ENCODE measurements at regions of chr5 and their contacts with region 1.

Region 1: GRCh38 chr5:35117967-35118366 is 70.2 kb upstream of the AGXT2 start:
- DNase-seq: no peak
- H3K4me3 ChIP-seq: no peak overlapping the region
- H3K27ac ChIP-seq: no peak overlapping the region
- H3K4me1 ChIP-seq: no peaks in the 10 kb centered on the region
- H3K27me3 ChIP-seq: no peaks in the 10 kb centered on the region
- CTCF ChIP-seq: no peak
- EP300 ChIP-seq: no peak
- POLR2A ChIP-seq: no peak
- RAD21 ChIP-seq: no peak

Region 2: DNA sequence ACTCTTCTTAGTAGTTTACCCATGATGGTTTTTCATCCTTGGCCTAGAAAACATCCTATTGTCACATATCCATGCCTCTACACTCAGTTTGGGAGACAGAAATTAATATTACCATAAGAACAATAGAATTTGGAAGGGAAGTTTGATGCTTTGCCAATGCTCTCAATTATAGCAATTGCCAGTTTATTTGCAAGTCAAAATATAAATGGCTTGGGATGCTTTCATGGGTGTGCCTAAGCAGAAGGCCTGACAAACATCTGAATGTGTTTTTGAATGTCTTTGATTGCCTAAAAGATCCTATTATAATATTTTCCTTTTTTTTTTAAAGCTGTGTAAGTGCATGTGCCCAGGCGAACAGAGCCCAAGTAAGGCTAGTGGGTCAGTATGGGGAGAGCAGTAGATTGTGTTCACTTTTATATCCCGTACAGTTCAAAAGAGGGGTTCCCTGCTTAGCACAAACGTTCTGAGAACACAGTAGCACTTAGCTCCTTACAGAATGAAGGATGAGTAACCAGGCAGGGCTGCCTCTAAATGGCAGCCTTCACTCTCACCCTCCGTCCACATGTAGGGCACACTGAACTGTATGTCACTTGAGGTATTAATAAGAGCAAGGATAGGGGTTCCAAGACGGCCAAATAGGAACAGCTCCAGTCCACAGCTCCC is 14.2 kb before region 1 on chr5:
- CTCF ChIA-PET with region 1: interaction called, 11 read pairs
- POLR2A ChIA-PET with region 1: no interaction called
- DNase-seq: no peak
- H3K4me3 ChIP-seq: no peak overlapping the region
- H3K27ac ChIP-seq: no peak overlapping the region
- H3K4me1 ChIP-seq: no peaks in the 10 kb centered on the region
- H3K27me3 ChIP-seq: no peaks in the 10 kb centered on the region
- CTCF ChIP-seq: no peak
- EP300 ChIP-seq: no peak
- POLR2A ChIP-seq: no peak
- RAD21 ChIP-seq: no peak

Measured in H1 (cell line).